WTC11 (cell line): ENCODE measurements at regions of chr1 and their contacts with region 1.

Region 1: GRCh38 chr1:117895482-117896114 is 33.8 kb downstream of the GDAP2 start:
- DNase-seq: peak; percentile 48
- ATAC-seq: 0 out of 2 replicates have a peak, but pooled peaks have one; percentile 16
- H3K4me3 Mint-ChIP-seq: no peak overlapping the region
- H3K27ac Mint-ChIP-seq: no peak overlapping the region
- H3K4me1 Mint-ChIP-seq: no peaks in the 10 kb centered on the region
- H3K27me3 Mint-ChIP-seq: no peaks in the 10 kb centered on the region
- CTCF ChIP-seq: peak; percentile 57

Region 2: GRCh38 chr1:117644696-117645311 is 250.8 kb before region 1 on chr1:
- CTCF ChIA-PET with region 1: no interaction called
- POLR2A ChIA-PET with region 1: no interaction called
- DNase-seq: no peak
- ATAC-seq: no peak
- H3K4me3 Mint-ChIP-seq: no peak overlapping the region
- H3K27ac Mint-ChIP-seq: no peak overlapping the region
- H3K4me1 Mint-ChIP-seq: no peaks in the 10 kb centered on the region
- H3K27me3 Mint-ChIP-seq: no peaks in the 10 kb centered on the region
- CTCF ChIP-seq: no peak

Region 3: DNA sequence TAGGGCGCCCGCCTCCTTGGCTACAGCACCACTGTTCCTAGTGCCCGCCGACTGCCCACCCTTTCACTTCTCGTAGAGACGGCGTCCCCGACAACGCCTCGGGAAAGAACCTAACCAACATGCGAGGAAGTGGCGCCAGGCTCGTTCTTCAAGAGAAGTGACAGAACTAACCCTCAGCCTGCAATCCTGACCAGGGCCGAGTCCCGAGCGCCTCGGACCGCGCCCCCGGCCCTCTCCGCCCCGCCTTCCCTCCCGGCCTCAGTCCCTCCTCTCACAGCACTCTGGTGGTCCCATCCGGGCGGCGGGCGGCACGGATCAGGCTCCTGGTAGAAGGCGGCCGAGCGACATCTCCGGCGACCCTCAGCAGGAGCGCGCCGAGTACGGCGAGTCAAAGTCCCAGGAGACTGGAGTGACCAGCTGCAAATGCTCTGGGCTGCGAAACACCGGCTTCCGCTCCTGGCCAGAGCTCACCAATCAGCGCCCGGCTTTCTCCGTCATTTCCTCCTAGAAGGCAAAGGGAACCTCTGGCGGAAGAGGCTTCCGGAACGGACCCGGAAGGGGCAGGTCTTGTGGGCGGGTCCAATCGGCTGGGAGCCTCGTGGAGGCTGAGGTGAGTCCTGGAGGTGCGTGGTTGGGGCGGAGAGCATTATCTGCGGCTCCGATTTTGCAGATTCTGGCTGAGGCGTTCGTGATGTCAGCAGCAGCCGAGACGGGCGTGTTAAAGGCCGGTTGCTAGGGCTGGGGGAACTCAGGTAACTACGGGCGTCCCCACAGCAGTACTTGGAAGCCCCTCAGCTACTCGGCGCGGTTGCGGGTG is 33.8 kb after region 1 on chr1 and contains the starts of genes GDAP2 and WDR3:
- CTCF ChIA-PET with region 1: interaction called, 13 read pairs
- POLR2A ChIA-PET with region 1: no interaction called
- DNase-seq: peak; percentile 95
- ATAC-seq: peak; percentile 91
- H3K4me3 Mint-ChIP-seq: peak within 1 kb of the TSS; percentile 98
- H3K27ac Mint-ChIP-seq: peak within 1 kb of the TSS; percentile 77
- H3K4me1 Mint-ChIP-seq: peaks cover 37% of the 10 kb centered on the region
- H3K27me3 Mint-ChIP-seq: no peaks in the 10 kb centered on the region
- CTCF ChIP-seq: no peak
- total RNA-seq, gene GDAP2: 21.1 to 24.1 TPM (median 22.4 TPM) in 3 replicates
- total RNA-seq, gene WDR3: 38.8 to 50.0 TPM (median 42.9 TPM) in 3 replicates

Region 4: GRCh38 chr1:117985973-117986372 is 90.4 kb after region 1 on chr1:
- CTCF ChIA-PET with region 1: no interaction called
- POLR2A ChIA-PET with region 1: no interaction called
- DNase-seq: no peak
- ATAC-seq: no peak
- H3K4me3 Mint-ChIP-seq: no peak overlapping the region
- H3K27ac Mint-ChIP-seq: no peak overlapping the region
- H3K4me1 Mint-ChIP-seq: peaks cover 9% of the 10 kb centered on the region
- H3K27me3 Mint-ChIP-seq: no peaks in the 10 kb centered on the region
- CTCF ChIP-seq: no peak